ENCODE measurements at regions of chr10 and their contacts with region 1.

Region 1: GRCh38 chr10:125160856-125161706 is 718 bp upstream of the CTBP2 start:
- DNase-seq: peak; percentile 89
- H3K4me3 Mint-ChIP-seq: peak overlapping the region; percentile 82
- H3K27ac Mint-ChIP-seq: peak overlapping the region; percentile 27
- H3K4me1 Mint-ChIP-seq: peaks cover 8% of the 10 kb centered on the region
- H3K27me3 Mint-ChIP-seq: no peaks in the 10 kb centered on the region
- CTCF ChIP-seq: peak; percentile 58

Region 2: DNA sequence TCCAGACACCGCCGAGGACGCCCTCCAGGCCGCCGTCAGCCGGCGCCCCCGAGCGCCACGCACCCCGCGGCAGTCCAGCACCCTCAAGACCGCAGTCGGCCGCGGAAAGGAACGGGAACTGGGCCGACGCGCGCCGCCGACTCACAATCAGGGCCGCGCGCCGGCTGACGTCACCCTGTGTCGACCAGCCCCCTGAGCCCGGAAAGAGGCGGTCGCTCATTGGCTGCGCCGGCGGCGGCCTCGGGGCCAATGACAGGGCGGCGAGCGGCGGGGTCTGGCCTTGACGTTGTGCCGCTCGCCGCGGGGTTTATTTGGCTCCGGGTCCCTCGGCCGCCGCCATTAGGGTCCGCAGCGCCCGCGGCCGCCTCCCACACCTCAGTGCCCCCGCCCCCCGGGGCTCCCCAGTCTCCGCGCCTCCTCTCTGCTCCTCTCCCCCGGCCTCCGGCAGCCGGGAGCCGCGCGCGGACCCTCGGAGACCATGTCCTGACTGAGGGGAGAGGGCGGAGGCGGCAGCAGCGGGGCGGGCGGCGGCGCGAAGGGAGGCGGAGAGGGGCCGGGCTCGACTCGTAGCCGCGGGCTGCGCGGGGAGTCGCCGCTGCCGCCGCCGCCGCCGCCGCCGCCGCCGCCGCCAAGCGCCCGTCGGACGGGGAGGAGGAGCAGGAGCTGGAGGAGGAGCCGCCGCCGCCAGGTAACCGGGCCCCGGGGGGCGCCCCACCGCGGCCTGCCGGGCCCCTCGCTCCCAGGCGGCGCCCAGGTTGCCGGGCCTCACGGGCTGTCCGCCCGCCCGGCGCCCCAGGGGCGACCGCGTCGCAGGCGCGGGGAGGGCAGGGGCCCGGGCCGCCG is 244.3 kb before region 1 on chr10:
- CTCF ChIA-PET with region 1: no interaction called
- POLR2A ChIA-PET with region 1: interaction called, 11 read pairs
- intact Hi-C with region 1: no loop called
- DNase-seq: peak; percentile 96
- H3K4me3 Mint-ChIP-seq: peak overlapping the region; percentile 91
- H3K27ac Mint-ChIP-seq: peak overlapping the region; percentile 80
- H3K4me1 Mint-ChIP-seq: peaks cover 21% of the 10 kb centered on the region
- H3K27me3 Mint-ChIP-seq: no peaks in the 10 kb centered on the region
- CTCF ChIP-seq: no peak

Region 3: GRCh38 chr10:125084191-125084613 is 76.9 kb before region 1 on chr10:
- CTCF ChIA-PET with region 1: no interaction called
- POLR2A ChIA-PET with region 1: interaction called, 13 read pairs
- intact Hi-C with region 1: loop called (anchors 5 kb)
- DNase-seq: peak; percentile 95
- H3K4me3 Mint-ChIP-seq: no peak overlapping the region
- H3K27ac Mint-ChIP-seq: peak overlapping the region; percentile 87
- H3K4me1 Mint-ChIP-seq: peaks cover 55% of the 10 kb centered on the region
- H3K27me3 Mint-ChIP-seq: no peaks in the 10 kb centered on the region
- CTCF ChIP-seq: no peak

Region 4: DNA sequence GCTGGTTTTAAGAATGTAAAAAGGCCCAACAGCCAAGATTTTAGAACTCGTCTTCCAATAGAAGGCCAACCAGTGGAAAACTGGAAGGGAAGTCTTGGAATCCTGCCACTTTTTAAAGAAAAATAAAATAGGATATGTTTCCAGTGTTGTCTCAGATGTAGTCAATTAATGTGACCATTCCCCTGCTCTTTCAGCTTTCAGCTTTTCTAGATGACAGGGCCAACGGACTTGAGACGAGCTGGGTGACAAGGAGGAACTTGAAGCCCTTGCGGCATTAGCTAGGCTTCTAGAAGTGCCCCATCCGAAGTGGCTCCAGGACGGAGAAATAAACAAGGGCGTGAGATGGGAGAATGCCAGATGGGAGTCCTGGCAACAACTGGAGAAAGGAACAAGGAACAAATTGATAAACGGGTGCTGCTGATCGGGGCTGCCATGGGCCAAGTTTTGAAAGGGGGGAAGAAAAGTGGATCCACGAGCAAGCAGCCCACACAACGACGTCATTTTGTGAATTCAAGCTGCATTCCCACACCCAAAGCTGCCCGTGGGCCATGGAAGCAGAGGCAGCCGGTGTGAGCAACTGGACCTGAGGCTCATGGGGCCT is 43.0 kb before region 1 on chr10:
- CTCF ChIA-PET with region 1: interaction called, 4 read pairs
- POLR2A ChIA-PET with region 1: interaction called, 165 read pairs
- intact Hi-C with region 1: loop called (anchors 5 kb)
- DNase-seq: no peak
- H3K4me3 Mint-ChIP-seq: no peak overlapping the region
- H3K27ac Mint-ChIP-seq: no peak overlapping the region
- H3K4me1 Mint-ChIP-seq: peaks cover 32% of the 10 kb centered on the region
- H3K27me3 Mint-ChIP-seq: no peaks in the 10 kb centered on the region
- CTCF ChIP-seq: no peak

Region 5: DNA sequence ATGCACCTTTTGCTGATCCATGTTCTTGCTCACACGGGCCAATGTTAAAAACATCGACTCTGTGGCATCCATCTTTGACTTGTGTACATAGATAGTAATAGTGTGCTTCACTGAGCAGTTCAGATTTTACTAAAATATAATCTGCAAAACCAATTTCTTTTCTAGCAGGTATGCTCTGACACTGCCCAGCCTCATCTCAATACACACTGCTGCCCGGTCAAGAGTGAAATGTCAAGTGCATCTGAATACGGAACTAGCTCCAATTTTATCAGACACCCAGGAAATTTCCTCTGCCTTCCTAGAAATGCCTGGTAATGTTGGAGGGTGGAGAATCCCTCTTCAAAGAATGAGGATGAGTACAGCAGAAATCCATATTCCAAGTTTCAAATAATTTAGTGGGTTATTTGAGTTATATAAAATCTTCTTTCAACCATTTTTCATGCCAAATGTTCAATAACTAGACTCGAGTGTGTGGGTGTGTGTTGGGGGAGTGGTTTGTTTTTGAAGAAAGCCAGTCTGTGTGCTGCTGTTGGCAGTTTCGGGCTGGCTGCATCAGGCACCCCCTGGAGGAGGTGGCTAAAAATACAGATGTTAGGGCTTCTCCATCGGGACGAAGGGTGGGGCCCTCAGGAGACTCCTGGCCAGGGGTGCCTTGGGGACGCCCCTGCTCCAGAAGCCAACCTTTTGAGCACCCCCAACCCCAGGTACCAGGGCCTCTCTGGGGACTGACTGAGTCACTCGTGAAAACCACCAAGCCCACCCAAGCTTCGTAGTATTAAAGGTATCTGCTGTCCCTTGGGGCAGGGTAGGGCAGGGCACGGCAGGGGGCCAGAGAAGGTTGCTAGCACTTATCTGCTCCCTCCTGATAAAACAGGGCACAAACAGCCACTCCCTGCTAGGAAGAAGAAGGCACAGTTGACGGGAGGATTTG is 16.1 kb before region 1 on chr10:
- CTCF ChIA-PET with region 1: interaction called, 5 read pairs
- POLR2A ChIA-PET with region 1: interaction called, 13 read pairs
- intact Hi-C with region 1: no loop called
- DNase-seq: peak; percentile 74
- H3K4me3 Mint-ChIP-seq: no peak overlapping the region
- H3K27ac Mint-ChIP-seq: peak overlapping the region; percentile 39
- H3K4me1 Mint-ChIP-seq: peaks cover 51% of the 10 kb centered on the region
- H3K27me3 Mint-ChIP-seq: no peaks in the 10 kb centered on the region
- CTCF ChIP-seq: peak; percentile 48

Region 6: DNA sequence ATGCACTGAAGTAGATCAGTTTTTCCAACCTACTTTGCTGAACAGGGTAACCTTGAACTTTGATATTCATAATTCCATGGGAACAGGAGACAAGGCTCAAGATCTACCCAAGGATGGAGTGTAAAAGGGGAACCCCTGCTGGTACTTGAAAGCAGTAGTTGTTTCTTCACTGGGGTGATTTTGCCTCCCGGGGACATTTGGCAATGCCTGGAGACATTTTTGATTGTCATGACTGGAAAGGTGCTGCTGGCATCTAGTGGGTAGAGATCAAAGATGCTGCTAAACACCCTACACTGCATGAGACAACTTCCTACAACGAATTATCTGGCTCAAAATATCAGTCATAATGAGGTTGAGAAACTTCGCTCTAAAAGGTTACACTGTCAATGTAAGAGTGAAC is 214.1 kb after region 1 on chr10:
- CTCF ChIA-PET with region 1: no interaction called
- POLR2A ChIA-PET with region 1: no interaction called
- intact Hi-C with region 1: loop called (anchors 1 kb)
- DNase-seq: peak; percentile 39
- H3K4me3 Mint-ChIP-seq: no peak overlapping the region
- H3K27ac Mint-ChIP-seq: no peak overlapping the region
- H3K4me1 Mint-ChIP-seq: no peaks in the 10 kb centered on the region
- H3K27me3 Mint-ChIP-seq: peaks cover 15% of the 10 kb centered on the region
- CTCF ChIP-seq: peak; percentile 35

Region 7: GRCh38 chr10:125700355-125700911 is 539.4 kb after region 1 on chr10:
- CTCF ChIA-PET with region 1: no interaction called
- POLR2A ChIA-PET with region 1: no interaction called
- intact Hi-C with region 1: loop called (anchors 2 kb)
- DNase-seq: peak; percentile 40
- H3K4me3 Mint-ChIP-seq: no peak overlapping the region
- H3K27ac Mint-ChIP-seq: no peak overlapping the region
- H3K4me1 Mint-ChIP-seq: no peaks in the 10 kb centered on the region
- H3K27me3 Mint-ChIP-seq: no peaks in the 10 kb centered on the region
- CTCF ChIP-seq: peak; percentile 33

Measured in MCF 10A (cell line).